Activated CD4-positive, alpha-beta T cell treated with anti-CD3 and anti-CD28 coated beads, Interleukin-2, amount 10 ng/mL, durations not matched to agents 7 days and 5 days (primary cell): ENCODE measurements at regions of chr10 and their contacts with region 1.

Region 1: DNA sequence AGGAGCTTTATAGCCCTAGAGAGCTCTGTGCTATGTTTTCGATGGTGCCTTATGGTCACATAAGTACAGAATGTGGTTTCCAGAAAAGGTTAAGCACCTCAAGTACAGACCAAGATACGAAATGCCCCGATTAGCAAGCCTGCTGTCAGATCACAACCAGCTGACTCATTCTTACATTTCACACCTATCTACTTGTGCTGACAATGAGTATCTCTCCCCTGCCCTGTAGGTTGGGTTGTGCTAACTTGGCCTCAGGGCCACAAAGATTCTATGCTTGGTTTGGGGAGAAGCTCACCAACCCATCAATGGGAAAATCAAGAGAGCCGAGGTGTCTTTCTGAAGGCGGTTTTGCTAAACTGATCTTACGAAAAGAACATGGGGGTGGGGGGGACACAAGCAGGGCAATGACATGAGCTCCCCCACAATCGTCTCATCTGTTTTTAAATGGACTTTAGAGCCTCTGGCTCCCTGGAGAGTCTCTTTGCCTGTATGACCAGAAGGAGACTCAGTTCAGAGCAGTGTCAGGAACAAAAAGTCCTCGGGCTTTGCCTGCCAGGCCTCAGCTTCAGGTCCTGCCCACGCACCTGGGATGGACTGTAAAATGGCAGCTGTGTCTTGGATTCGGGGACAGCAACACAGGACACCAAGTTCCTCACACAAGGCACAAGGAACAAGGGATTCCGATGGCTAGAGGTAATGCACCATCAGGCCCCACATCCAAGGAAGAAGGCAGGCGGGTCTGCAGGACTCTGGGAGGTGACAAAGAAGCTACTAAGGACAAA is 55.1 kb downstream of the FAM53B start:
- DNase-seq: peak; percentile 55
- H3K4me3 Mint-ChIP-seq: no peak overlapping the region
- H3K27ac Mint-ChIP-seq: peak overlapping the region; percentile 83
- H3K4me1 Mint-ChIP-seq: peaks cover 62% of the 10 kb centered on the region
- H3K27me3 Mint-ChIP-seq: no peaks in the 10 kb centered on the region

Region 2: GRCh38 chr10:124547647-124548168 is 141.4 kb before region 1 on chr10:
- CTCF ChIA-PET with region 1: no interaction called
- POLR2A ChIA-PET with region 1: no interaction called
- DNase-seq: no peak
- H3K4me3 Mint-ChIP-seq: no peak overlapping the region
- H3K27ac Mint-ChIP-seq: no peak overlapping the region
- H3K4me1 Mint-ChIP-seq: peaks cover 10% of the 10 kb centered on the region
- H3K27me3 Mint-ChIP-seq: no peaks in the 10 kb centered on the region

Region 3: GRCh38 chr10:124647421-124648130 is 41.5 kb before region 1 on chr10:
- CTCF ChIA-PET with region 1: interaction called, 13 read pairs
- POLR2A ChIA-PET with region 1: interaction called, 3 read pairs
- DNase-seq: peak; percentile 83
- H3K4me3 Mint-ChIP-seq: peak overlapping the region; percentile 71
- H3K27ac Mint-ChIP-seq: peak overlapping the region; percentile 98
- H3K4me1 Mint-ChIP-seq: peaks cover 77% of the 10 kb centered on the region
- H3K27me3 Mint-ChIP-seq: no peaks in the 10 kb centered on the region

Region 4: DNA sequence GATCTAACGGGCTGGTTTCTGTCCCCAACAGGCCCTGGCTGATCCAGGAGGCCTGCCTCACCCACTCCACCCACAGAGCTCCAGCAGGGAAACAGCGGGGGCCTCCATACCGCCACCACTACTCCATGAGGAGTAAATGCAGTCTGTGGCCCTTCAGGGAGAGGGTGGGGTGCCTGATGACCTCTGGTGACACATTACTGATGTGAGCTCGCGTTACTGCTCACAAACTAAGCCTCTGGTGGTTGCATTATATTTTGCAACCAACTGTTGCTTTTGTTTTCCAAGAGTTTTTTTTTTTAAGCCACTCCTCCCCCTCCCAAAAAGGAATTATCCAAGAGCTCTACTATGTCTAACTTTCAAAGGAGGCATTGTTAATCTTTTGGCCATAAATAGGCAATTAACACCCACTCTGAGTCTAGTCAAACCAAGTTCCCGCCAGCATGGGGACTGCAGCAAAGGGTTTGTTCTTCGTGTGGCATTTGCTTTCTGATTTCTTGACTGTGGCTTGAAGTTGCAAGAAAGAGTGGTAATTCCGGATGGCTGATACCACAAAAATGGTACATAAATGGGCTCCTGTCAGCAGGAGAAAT is 17.5 kb before region 1 on chr10:
- CTCF ChIA-PET with region 1: interaction called, 33 read pairs
- POLR2A ChIA-PET with region 1: no interaction called
- DNase-seq: peak; percentile 21
- H3K4me3 Mint-ChIP-seq: no peak overlapping the region
- H3K27ac Mint-ChIP-seq: peak overlapping the region; percentile 79
- H3K4me1 Mint-ChIP-seq: peaks cover 60% of the 10 kb centered on the region
- H3K27me3 Mint-ChIP-seq: no peaks in the 10 kb centered on the region

Region 5: GRCh38 chr10:124677749-124678556 is 11.1 kb before region 1 on chr10:
- CTCF ChIA-PET with region 1: interaction called, 33 read pairs
- POLR2A ChIA-PET with region 1: no interaction called
- DNase-seq: no peak
- H3K4me3 Mint-ChIP-seq: peak overlapping the region; percentile 55
- H3K27ac Mint-ChIP-seq: peak overlapping the region; percentile 90
- H3K4me1 Mint-ChIP-seq: peaks cover 68% of the 10 kb centered on the region
- H3K27me3 Mint-ChIP-seq: no peaks in the 10 kb centered on the region

Region 6: DNA sequence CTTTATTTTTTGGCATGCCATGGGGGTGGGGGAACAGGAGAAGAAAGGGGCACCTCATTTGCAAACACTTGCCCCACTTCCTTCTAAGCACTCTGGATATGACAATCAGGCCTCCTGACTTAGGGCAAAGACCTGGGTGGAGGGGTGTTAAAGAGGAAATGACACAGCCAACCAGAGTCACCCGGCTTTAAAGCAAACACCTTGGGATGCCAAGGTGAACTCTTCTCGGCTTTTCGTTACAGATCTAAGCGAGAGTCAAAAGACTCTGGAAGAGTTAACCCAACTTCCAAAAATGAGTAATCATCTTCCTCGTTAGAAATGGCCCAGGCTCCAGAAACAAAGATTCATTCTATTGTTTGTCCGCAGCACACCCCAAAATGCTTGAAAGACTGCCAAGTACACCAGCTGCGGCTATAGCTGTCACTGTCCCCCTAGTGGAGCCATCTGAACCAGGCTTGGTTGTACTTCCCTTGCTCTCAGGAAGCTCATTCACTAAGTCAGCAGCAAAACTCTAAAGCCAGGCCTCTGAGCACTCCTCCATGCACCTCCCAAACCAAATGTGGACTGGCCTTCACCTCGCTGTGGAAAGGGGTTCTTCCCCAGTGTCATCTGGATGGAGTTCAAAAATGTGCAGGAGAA is 30.3 kb after region 1 on chr10:
- CTCF ChIA-PET with region 1: interaction called, 49 read pairs
- POLR2A ChIA-PET with region 1: interaction called, 3 read pairs
- DNase-seq: peak; percentile 80
- H3K4me3 Mint-ChIP-seq: peak overlapping the region; percentile 30
- H3K27ac Mint-ChIP-seq: peak overlapping the region; percentile 96
- H3K4me1 Mint-ChIP-seq: peaks cover 91% of the 10 kb centered on the region
- H3K27me3 Mint-ChIP-seq: no peaks in the 10 kb centered on the region

Region 7: DNA sequence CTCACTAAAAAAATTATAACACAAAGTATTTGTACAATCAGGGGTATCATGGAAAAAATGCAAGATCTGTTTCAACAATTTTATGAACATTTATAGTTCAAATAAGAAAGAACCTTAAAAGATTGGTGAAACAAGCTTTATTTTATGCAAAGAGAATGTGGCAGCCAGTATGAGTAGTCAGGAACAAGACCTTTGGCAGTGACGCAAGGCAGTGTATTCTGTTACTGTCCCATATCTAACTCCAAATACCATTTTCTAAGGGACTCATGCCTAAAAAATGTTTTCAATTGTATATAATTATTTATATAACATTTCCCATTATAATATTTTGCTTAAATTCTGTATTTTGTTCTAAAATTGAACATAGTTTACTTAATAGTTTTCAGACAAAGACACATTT is 74.2 kb after region 1 on chr10:
- CTCF ChIA-PET with region 1: no interaction called
- POLR2A ChIA-PET with region 1: no interaction called
- DNase-seq: no peak
- H3K4me3 Mint-ChIP-seq: no peak overlapping the region
- H3K27ac Mint-ChIP-seq: no peak overlapping the region
- H3K4me1 Mint-ChIP-seq: peaks cover 8% of the 10 kb centered on the region
- H3K27me3 Mint-ChIP-seq: no peaks in the 10 kb centered on the region